ENCODE measurements at regions of chr9 and their contacts with region 1.

Region 1: GRCh38 chr9:16133556-16134227 is 580.8 kb downstream of the CCDC171 start:
- DNase-seq: peak in 1 of 2 donors; percentile 85
- H3K4me3 ChIP-seq: no peak overlapping the region
- H3K27ac ChIP-seq: no peak overlapping the region
- H3K4me1 ChIP-seq: peaks cover 8% of the 10 kb centered on the region
- H3K27me3 ChIP-seq: no peaks in the 10 kb centered on the region
- CTCF ChIP-seq: no peak
- POLR2A ChIP-seq: no peak

Region 2: DNA sequence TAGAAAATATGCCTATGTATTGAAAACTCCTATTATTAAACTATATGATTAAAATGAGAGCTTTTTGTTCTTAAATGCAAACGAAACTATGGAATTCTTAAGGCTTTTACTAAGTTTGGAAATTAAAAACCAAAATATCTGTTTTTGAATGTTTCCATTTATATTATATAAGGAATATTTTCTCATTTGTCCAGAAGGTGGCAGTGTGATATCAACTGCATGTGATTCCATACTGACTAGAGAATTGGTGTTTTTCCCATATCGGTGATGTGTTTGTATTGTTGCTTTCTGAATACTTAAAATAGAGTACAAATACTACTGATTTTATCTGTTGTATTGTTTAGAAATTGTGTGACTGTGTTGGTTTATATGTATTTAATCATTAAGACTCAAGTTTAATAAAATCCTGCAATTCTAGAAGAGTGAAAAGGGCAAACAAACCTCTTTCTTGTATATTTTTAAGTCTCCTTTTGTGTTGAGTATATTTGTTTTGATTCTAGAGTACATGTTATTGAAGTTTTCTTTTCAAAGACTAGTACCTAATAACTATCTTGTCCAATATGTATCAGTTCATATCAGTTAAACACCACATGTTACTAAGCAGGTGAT is 260.0 kb before region 1 on chr9:
- intact Hi-C with region 1: loop called (anchors 10 kb)
- DNase-seq: no peak
- H3K4me3 ChIP-seq: no peak overlapping the region
- H3K27ac ChIP-seq: no peak overlapping the region
- H3K4me1 ChIP-seq: no peaks in the 10 kb centered on the region
- H3K27me3 ChIP-seq: no peaks in the 10 kb centered on the region
- CTCF ChIP-seq: peak; percentile 52 to 70 (median 62)
- POLR2A ChIP-seq: no peak

Region 3: DNA sequence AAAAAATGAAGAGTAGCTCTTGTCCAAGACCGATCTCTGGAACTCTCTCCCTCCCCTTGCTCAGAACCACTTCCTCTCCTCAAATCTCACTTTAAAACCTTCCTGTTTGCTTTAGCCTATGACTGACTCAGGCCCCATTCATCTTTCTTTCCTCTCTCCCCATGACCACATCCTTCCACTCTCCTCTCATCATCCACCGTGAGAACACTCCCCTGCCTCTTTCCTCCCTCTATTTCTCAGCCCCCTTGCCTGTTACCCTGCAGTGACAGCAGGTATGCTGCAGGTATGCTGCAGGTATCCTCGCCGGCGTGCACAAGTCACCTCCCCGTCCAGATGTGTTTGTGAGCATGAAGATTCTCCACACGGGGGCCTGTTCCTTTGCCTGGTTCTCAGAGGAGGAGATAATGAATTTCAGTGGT is 75.6 kb before region 1 on chr9:
- intact Hi-C with region 1: no loop called
- DNase-seq: peak; percentile 4 to 80
- H3K4me3 ChIP-seq: no peak overlapping the region
- H3K27ac ChIP-seq: no peak overlapping the region
- H3K4me1 ChIP-seq: no peaks in the 10 kb centered on the region
- H3K27me3 ChIP-seq: no peaks in the 10 kb centered on the region
- CTCF ChIP-seq: no peak
- POLR2A ChIP-seq: no peak

Region 4: GRCh38 chr9:16245756-16246440 is 112.2 kb after region 1 on chr9:
- intact Hi-C with region 1: no loop called
- DNase-seq: no peak
- H3K4me3 ChIP-seq: no peak overlapping the region
- H3K27ac ChIP-seq: peak overlapping the region; percentile 74
- H3K4me1 ChIP-seq: peaks cover 16% of the 10 kb centered on the region
- H3K27me3 ChIP-seq: no peaks in the 10 kb centered on the region
- CTCF ChIP-seq: no peak
- POLR2A ChIP-seq: no peak